ENCODE measurements at regions of chr14 and their contacts with region 1.

Region 1: GRCh38 chr14:69535230-69535848 is 39.3 kb downstream of the CCDC177 start:
- DNase-seq: peak; percentile 25 to 94 (median 72)

Region 2: DNA sequence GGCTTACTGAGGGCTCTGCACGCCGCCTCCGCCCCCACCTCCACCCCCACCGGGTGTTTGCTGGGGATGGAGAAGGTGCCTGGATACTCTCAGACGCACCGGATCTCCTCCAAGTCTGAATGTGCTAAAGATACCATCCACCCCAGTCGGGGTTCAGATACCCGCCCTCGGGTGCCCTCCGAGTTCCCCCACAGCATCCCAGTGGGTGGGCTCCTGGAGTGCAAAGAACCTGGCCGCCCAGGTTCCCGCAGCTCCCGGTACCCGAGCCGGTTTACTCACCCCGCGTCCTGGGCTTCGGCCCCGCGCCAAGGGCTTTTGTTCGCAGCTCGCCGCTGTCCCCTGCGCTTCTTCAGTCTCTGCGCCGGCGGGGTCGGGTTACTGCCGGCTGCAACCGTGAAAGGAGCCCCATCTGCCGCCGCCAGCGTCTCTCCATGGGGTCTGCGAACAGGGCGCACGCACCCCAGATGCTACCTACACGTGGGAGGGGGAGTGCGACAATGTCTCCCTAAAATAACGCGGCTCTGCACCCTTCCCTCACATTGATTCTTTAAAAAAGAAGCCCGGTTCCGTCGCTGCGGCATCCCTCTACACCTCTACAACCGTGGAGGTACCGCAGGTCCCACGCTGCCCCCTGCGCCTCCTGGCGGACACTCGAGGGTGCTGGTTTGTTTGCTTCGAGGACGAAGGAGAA is 39.1 kb after region 1 on chr14 and contains the start of gene CCDC177:
- intact Hi-C with region 1: loop called (anchors 5 kb)
- DNase-seq: peak; percentile 47 to 97 (median 78)

Measured in posterior cingulate gyrus (tissue), 11 donors.